PC-3 (cell line): ENCODE measurements at regions of chr11 and their contacts with region 1.

Region 1: DNA sequence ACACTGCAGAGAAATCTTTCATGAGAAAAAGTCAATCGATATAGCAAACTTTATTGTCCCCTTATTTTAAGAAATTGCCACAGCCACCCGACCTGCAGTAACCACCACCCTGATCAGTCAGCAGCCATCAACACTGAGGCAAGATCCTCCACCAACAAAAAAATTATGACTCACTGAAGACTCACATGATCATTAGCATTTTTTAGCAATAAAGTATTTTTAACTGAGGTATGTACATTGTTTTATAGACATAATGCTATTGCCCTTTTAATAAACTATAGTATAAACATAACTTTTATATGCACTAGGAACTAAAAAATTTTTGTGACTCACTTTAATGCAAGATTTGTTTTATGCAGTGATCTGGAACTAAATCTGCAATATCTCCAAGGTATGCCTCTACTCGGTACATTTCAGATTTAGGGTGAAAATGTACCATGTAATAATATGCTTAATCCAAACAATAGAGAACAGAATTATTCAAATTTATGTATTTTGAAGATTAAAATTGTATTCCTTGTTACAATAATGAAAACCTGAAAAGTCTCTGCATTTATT is 79.2 kb upstream of the CEP126 start:
- DNase-seq: peak; percentile 89
- ATAC-seq: peak; percentile 95
- H3K4me3 ChIP-seq: peak overlapping the region; percentile 33; the same call in 1 of the 2 replicates
- H3K27ac ChIP-seq: peak overlapping the region; percentile 55
- H3K4me1 ChIP-seq: peaks cover 14% of the 10 kb centered on the region
- H3K27me3 ChIP-seq: no peaks in the 10 kb centered on the region
- CTCF ChIP-seq: no peak

Region 2: GRCh38 chr11:101498891-101499290 is 336.7 kb before region 1 on chr11:
- CTCF ChIA-PET with region 1: no interaction called
- POLR2A ChIA-PET with region 1: no interaction called
- intact Hi-C with region 1: no loop called
- DNase-seq: no peak
- ATAC-seq: no peak
- H3K4me3 ChIP-seq: no peak overlapping the region
- H3K27ac ChIP-seq: no peak overlapping the region
- H3K4me1 ChIP-seq: no peaks in the 10 kb centered on the region
- H3K27me3 ChIP-seq: peaks cover 12% of the 10 kb centered on the region; the same call in 1 of the 2 replicates
- CTCF ChIP-seq: no peak

Region 3: DNA sequence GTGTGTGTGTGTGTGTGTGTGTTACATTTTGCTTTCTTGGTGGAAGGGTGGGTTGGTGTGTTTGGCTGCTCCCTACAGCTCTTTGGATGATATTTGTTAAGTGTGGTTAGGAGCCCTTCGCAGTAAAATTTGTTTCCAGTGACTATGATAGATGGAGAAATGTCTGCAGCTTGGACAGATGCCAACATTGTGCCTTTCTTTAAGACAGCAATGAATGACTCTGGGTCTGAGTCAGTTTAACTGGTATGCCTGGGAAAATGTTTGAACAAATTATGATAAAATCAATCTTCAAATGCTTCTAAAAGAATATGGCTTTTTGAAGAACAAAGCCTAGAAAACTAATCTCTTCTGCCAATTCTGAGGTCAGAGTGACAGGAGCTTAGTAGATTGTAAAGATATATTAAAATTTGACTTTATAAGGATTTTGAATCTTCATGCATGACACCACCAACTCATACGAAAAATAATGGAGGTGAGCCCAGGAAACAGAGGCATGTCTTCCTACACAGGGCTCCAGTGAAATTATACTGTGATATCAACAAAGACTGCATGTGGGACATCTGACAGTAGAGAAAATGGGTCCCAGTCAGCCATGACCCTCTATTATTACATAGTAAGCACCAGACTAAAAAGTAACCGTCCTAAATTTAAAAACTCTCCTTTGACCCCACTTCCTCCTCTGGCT is 148.9 kb before region 1 on chr11:
- CTCF ChIA-PET with region 1: no interaction called
- POLR2A ChIA-PET with region 1: no interaction called
- intact Hi-C with region 1: loop called (anchors 10 kb)
- DNase-seq: peak; percentile 98
- ATAC-seq: peak; percentile 94
- H3K4me3 ChIP-seq: no peak overlapping the region
- H3K27ac ChIP-seq: peak overlapping the region; percentile 91
- H3K4me1 ChIP-seq: peaks cover 28% of the 10 kb centered on the region
- H3K27me3 ChIP-seq: no peaks in the 10 kb centered on the region
- CTCF ChIP-seq: no peak

Region 4: DNA sequence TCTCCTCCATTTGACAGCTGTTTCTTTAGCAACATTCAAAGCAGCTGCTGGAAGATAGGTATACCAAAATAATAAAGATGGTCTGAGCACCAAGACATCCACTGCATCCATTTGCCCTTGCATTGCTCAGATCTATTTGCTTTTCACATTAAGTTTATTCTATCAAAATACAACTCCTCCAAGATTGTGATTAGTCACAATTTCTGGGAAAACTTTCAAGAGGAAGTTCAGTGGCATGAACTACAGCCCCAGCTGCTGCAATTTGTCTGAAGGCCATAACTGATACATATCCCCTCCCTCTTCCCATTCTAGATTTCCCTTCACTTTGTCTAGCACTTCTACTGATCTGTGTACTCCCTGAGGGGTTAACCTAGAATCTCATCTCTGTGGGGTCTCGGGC is 38.2 kb before region 1 on chr11:
- CTCF ChIA-PET with region 1: no interaction called
- POLR2A ChIA-PET with region 1: no interaction called
- intact Hi-C with region 1: loop called (anchors 2 kb)
- DNase-seq: peak; percentile 85
- ATAC-seq: peak; percentile 89
- H3K4me3 ChIP-seq: no peak overlapping the region
- H3K27ac ChIP-seq: peak overlapping the region; percentile 38
- H3K4me1 ChIP-seq: peaks cover 15% of the 10 kb centered on the region
- H3K27me3 ChIP-seq: no peaks in the 10 kb centered on the region
- CTCF ChIP-seq: no peak

Region 5: DNA sequence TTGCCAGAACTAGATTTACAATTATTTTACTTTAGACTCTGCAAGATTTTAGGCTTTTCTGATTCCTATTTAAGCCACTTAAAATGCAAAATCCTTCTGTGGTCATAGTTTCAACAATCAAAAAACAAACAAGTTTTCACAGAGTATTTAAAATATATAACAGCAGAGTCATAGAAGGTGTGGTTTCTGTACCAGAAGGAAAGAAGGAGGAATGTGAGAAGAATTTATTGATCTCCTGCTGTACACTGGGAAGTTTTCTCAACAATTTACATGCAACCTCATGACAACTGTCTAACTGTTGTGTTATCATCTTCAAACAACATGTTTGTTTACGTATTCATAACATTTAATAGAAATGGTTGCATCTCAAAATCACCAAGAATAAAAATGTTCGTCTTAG is 23.0 kb before region 1 on chr11:
- CTCF ChIA-PET with region 1: no interaction called
- POLR2A ChIA-PET with region 1: interaction called, 4 read pairs
- intact Hi-C with region 1: loop called (anchors 1 kb)
- DNase-seq: no peak
- ATAC-seq: peak; percentile 86
- H3K4me3 ChIP-seq: no peak overlapping the region
- H3K27ac ChIP-seq: no peak overlapping the region
- H3K4me1 ChIP-seq: peaks cover 4% of the 10 kb centered on the region
- H3K27me3 ChIP-seq: no peaks in the 10 kb centered on the region
- CTCF ChIP-seq: no peak